ENCODE measurements at regions of chr14 and their contacts with region 1.

Region 1: DNA sequence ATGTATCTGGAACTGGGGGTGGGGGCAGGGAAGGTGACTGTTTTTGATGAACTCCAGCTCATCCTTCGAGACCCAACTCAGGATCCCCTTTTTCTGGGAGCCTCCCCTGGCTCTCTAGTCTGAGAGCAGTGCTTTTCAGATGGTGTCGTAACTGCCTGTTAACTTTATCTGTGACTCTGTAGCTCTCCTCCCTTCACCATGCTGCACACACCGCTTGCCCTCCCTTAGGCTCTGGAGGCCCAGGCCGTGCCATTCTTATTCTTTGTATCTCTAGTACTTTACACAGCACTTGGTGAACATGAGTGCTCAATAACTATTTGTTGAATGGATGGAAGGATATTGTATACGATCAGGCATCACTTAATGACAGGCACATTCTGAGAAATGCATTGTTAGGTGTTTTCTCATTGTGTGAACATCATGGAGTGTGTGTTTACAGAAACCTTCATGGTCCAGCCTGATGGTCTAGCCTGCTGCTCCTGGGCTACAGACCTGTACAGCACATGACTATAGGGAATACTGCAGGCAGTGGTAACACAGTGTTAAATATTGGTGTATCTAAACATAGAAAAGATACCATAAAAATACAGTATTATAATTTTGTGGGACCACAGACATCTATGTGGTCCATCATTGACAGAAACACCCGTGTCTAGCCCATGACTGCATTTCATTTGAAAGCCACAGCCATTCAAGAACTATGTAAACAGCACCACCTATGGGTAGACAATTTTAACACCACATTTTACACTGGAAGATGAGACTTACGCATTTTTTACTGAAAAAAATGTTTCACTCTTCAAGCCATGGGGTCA is 91.8 kb downstream of the EML1 start:
- DNase-seq: peak; percentile 30
- ATAC-seq: peak; percentile 90
- H3K4me3 ChIP-seq: no peak overlapping the region
- H3K27ac ChIP-seq: no peak overlapping the region
- H3K4me1 ChIP-seq: no peaks in the 10 kb centered on the region
- H3K27me3 ChIP-seq: no peaks in the 10 kb centered on the region
- CTCF ChIP-seq: peak; percentile 71

Region 2: DNA sequence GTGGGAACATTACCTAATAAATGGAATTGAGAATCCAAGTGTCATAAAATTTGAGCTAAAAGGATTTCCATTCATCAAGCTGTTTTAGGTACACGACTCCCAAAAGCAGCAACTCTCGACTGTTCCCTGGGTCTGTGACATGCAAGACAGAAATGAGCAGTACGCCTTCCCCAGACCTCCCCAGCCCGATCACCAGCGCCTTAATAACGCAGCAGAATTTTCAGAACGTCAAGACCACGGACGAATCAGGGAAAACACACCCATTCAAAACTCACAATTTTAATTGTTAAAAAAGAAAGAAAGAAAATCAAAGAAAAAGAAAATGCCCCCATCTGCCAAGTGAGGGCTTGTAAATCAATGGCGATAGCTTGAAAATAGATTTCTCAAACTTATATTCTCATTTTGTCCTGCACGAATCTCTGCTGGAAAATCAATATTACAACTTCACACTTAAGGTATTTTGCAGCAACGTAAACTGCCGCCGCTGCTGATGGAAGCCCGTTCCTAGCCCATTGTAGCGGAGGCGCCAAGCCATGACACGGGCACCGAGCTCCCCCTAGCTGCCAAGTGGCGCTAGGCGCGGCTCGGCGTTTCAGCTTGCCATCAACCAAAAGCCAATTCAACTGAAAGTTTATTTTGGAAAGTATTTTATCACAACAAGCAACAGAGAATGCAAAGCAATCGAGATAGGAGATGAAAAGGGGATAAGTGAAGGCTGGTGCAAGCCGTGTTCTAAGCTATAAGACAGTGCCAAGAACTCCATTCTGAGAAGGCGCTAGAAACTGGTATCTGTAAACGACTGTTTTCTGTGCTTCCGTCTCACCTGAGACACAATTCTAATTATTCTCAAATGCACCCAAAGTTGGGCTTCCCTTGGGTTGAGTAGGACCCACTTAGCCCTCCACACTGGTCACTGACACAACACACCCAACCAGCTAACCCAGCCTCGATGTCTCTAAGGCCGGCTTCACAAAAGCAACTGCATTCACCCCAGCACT is 618.6 kb before region 1 on chr14:
- CTCF ChIA-PET with region 1: no interaction called
- POLR2A ChIA-PET with region 1: interaction called, 21 read pairs
- in situ Hi-C with region 1: no loop called
- intact Hi-C with region 1: no loop called
- DNase-seq: no peak
- ATAC-seq: peak; percentile 86
- H3K4me3 ChIP-seq: no peak overlapping the region
- H3K27ac ChIP-seq: no peak overlapping the region
- H3K4me1 ChIP-seq: peaks cover 2% of the 10 kb centered on the region; the same call in 1 of the 2 replicates
- H3K27me3 ChIP-seq: peaks cover 11% of the 10 kb centered on the region
- CTCF ChIP-seq: peak; percentile 93

Region 3: GRCh38 chr14:99683619-99684355 is 201.3 kb before region 1 on chr14 and contains the start of gene CYP46A1:
- CTCF ChIA-PET with region 1: interaction called, 3 read pairs
- POLR2A ChIA-PET with region 1: no interaction called
- in situ Hi-C with region 1: no loop called
- intact Hi-C with region 1: loop called (anchors 5 kb)
- DNase-seq: peak; percentile 84
- ATAC-seq: peak; percentile 91
- H3K4me3 ChIP-seq: peak within 1 kb of the TSS; percentile 82 to 91
- H3K27ac ChIP-seq: peak within 1 kb of the TSS; percentile 81
- H3K4me1 ChIP-seq: no peaks in the 10 kb centered on the region
- H3K27me3 ChIP-seq: no peaks in the 10 kb centered on the region; the same call in 1 of the 2 replicates
- CTCF ChIP-seq: no peak
- total RNA-seq, gene CYP46A1: 0.36 TPM

Region 4: GRCh38 chr14:99729991-99730868 is 154.8 kb before region 1 on chr14:
- CTCF ChIA-PET with region 1: interaction called, 3 read pairs
- POLR2A ChIA-PET with region 1: no interaction called
- in situ Hi-C with region 1: no loop called
- intact Hi-C with region 1: loop called (anchors 2 kb)
- DNase-seq: no peak
- ATAC-seq: peak; percentile 78
- H3K4me3 ChIP-seq: peak overlapping the region; percentile 46 to 47
- H3K27ac ChIP-seq: 0 out of 2 replicates have a peak overlapping the region, but pooled peaks have one; percentile 48
- H3K4me1 ChIP-seq: peaks cover 12% of the 10 kb centered on the region
- H3K27me3 ChIP-seq: no peaks in the 10 kb centered on the region
- CTCF ChIP-seq: peak; percentile 92

Region 5: GRCh38 chr14:99793213-99794150 is 91.6 kb before region 1 on chr14 and contains the start of gene EML1:
- CTCF ChIA-PET with region 1: no interaction called
- POLR2A ChIA-PET with region 1: no interaction called
- in situ Hi-C with region 1: no loop called
- intact Hi-C with region 1: loop called (anchors 10 kb)
- DNase-seq: no peak
- ATAC-seq: peak; percentile 97
- H3K4me3 ChIP-seq: peak within 1 kb of the TSS; percentile 60 to 64
- H3K27ac ChIP-seq: peak within 1 kb of the TSS; percentile 90
- H3K4me1 ChIP-seq: peaks cover 16% of the 10 kb centered on the region
- H3K27me3 ChIP-seq: no peaks in the 10 kb centered on the region
- CTCF ChIP-seq: peak; percentile 74
- total RNA-seq, gene EML1: 35.3 TPM

Region 6: DNA sequence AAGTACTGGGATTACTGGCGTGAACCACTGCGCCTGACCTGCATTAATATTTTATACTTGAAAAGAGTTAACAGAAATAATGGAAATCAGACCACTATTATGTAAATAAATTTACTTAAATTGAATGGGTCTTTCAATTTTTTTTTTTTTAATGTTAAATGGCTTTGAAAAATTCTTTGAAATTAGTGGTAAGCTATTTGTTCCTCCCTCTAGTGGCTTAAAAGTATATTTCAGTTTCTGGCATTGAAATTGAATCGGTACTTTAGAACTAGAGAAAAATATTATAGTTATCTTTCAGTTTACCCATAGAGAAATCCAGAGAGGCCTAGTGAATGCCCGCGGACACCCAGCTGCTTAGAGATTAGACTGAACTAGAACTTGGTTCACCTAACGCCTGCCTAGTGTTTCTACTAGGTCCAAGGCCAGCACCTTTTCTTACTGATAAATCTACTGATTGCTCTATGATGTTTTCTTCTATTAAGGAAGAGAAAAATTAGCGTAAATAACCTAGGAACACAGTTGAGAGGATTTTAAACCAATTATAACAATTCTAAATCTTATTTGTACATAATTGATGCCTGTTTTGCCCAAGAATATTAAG is 14.6 kb after region 1 on chr14:
- CTCF ChIA-PET with region 1: interaction called, 10 read pairs
- POLR2A ChIA-PET with region 1: no interaction called
- in situ Hi-C with region 1: no loop called
- intact Hi-C with region 1: no loop called
- DNase-seq: no peak
- ATAC-seq: no peak
- H3K4me3 ChIP-seq: no peak overlapping the region
- H3K27ac ChIP-seq: no peak overlapping the region
- H3K4me1 ChIP-seq: no peaks in the 10 kb centered on the region
- H3K27me3 ChIP-seq: no peaks in the 10 kb centered on the region
- CTCF ChIP-seq: peak; percentile 70

Measured in Panc1 (cell line).